Cardiac septum (tissue), 1 donor: ENCODE measurements at regions of chr16 and their contacts with region 1.

Region 1: DNA sequence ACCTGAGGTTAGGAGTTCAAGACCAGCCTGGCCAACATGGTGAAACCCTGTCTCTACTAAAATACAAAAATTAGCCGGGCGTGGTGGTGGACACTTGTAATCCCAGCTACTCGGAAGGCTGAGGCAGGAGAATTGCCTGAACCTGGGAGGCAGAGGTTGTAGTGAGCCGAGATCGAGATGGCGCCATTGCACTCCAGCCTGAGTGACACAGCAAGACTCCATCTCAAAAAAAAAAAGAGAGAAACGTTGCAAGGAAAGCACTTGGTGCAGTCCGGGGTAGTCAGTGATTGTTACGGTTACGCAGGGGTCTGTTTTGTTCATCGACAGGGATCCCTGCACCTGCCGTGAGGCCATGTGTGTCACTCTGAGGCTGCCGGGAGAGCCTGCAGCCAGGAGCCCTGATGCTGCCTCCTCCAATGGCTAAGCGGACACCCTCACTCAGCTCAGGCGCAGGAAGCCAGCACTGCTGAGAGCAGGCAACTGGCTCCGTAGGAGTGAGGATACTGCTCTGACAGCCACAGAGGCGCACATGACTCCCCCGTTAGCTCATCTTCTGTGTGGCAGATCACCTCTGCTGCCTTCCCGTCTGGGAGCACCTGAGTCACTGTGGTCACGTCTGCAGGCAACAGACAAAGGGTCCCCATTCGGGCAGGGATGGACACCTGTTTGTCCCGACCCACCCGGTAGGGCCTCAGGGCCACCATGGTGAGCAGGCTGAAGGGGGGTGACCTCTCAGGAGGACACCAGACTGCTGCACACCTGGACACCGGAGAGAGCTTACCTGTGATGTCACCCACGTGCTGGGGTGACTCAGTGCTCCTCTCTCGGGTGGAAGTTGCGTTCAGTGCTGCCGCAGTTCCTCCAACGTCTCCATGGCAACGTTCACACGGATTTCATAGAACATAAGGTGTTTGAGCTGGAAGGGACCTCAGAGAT is 5.2 kb upstream of the RAB26 start:
- DNase-seq: no peak

Region 2: GRCh38 chr16:1929578-1930337 is 213.5 kb before region 1 on chr16:
- intact Hi-C with region 1: no loop called
- DNase-seq: peak; percentile 96

Region 3: GRCh38 chr16:2121853-2122252 is 21.4 kb before region 1 on chr16:
- intact Hi-C with region 1: loop called (anchors 1 kb)
- DNase-seq: no peak